SK-N-SH (cell line): ENCODE measurements at regions of chr7 and their contacts with region 1.

Region 1: GRCh38 chr7:139645572-139646523 is 122.4 kb downstream of the CLEC2L start:
- DNase-seq: peak; percentile 85
- H3K4me3 ChIP-seq: no peak overlapping the region; a peak in 1 of 4 replicates
- H3K27ac ChIP-seq: no peak overlapping the region
- H3K4me1 ChIP-seq: peaks cover 0 to 5% of the 10 kb centered on the region in 2 experiments; a peak in 1 of 4 replicates
- H3K27me3 ChIP-seq: no peaks in the 10 kb centered on the region
- CTCF ChIP-seq: peak; percentile 99
- EP300 ChIP-seq: no peak
- RAD21 ChIP-seq: peak; percentile 100

Region 2: DNA sequence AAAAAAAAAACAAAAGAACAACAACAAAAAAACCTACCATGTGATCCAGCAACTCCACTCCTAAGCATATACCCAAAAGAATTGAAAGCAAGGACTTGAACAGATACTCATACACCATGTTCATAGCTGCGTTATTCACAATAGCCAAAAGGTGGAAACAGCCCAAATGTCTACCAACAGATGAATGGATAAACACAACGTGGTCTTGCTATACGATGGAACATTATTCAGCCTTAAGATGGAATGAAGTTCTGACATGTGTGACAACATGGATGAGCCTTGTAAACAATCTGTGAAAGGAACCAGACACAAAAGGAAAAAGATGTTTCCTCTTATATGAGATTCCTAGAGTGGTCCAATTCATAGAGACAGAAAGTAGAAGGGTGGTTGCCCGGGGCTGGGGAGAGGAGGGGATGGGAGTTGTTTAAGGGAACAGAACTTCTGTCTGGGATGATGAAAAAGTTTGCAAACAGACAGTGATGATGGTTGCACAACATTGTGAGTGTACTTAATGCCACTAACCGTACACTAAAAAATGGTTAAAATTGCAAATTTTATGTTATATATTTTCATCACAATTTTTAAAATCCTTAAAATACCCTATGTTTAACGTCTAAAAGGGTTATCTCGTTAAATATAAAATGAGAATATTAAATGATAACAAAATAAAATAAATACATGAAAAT is 110.7 kb before region 1 on chr7:
- CTCF ChIA-PET with region 1: no interaction called
- POLR2A ChIA-PET with region 1: no interaction called
- DNase-seq: no peak
- H3K4me3 ChIP-seq: no peak overlapping the region
- H3K27ac ChIP-seq: no peak overlapping the region
- H3K4me1 ChIP-seq: no peaks in the 10 kb centered on the region
- H3K27me3 ChIP-seq: peaks cover 19% of the 10 kb centered on the region
- CTCF ChIP-seq: no peak
- EP300 ChIP-seq: no peak
- RAD21 ChIP-seq: no peak

Region 3: GRCh38 chr7:139629392-139630082 is 16.3 kb before region 1 on chr7:
- CTCF ChIA-PET with region 1: interaction called, 38 read pairs
- POLR2A ChIA-PET with region 1: no interaction called
- DNase-seq: no peak
- H3K4me3 ChIP-seq: no peak overlapping the region
- H3K27ac ChIP-seq: no peak overlapping the region
- H3K4me1 ChIP-seq: no peaks in the 10 kb centered on the region
- H3K27me3 ChIP-seq: no peaks in the 10 kb centered on the region
- CTCF ChIP-seq: no peak
- EP300 ChIP-seq: no peak
- RAD21 ChIP-seq: peak; percentile 25

Region 4: DNA sequence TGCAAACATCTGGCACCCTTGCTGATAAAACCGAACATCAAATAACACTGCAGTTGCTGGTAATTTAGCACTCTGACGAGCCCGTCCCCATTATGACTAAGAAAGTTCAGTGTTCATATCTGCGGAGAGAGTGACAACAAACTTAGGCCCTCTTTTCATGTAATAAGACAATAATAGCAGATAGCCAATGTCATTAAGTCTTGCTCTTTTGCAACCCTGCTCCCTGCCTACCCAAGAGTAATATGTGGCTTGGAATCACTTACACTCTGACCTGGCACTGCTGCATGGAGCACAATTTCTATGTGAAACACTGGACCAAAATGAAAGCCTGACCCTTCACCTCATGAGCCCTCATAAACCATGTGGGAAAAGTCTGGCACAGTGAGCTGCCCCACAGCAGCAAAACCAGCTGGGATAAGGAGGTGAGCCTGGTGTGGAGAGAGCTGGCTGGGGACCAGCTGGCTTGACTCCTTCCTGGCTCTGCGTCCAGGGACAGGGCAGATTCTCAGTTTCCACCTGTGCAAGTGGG is 45.5 kb after region 1 on chr7:
- CTCF ChIA-PET with region 1: interaction called, 14 read pairs
- POLR2A ChIA-PET with region 1: no interaction called
- DNase-seq: peak; percentile 81
- H3K4me3 ChIP-seq: no peak overlapping the region
- H3K27ac ChIP-seq: peak overlapping the region in 1 of 2 experiments; percentile 78; a peak in 2 of 4 replicates
- H3K4me1 ChIP-seq: peaks cover 0 to 34% of the 10 kb centered on the region in 2 experiments; a peak in 2 of 4 replicates
- H3K27me3 ChIP-seq: no peaks in the 10 kb centered on the region
- CTCF ChIP-seq: no peak
- EP300 ChIP-seq: peak in 1 of 2 experiments; percentile 61; a peak in 1 of 4 replicates
- RAD21 ChIP-seq: peak; percentile 33

Region 5: DNA sequence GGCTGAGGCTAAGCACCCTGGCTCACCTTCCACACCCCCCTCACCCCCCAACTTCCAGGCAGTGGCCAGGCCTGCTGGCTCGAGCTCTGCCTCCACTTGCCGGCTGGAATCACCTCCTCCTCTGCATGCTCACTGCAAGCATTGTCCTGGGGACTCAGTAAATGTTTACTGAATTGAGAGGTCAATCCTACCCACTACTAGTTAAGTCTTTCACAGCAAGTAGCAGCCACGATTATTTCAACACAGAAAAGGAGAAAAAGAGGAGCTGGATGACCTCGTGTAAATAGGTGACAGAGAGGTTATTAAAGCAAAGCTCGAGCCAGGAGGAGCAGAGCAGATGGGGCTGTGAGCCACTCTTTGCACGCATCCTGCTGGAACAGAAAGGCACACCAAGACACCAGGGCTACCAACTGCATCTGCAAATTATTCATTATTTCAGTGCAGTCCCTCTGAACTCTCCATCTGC is 99.9 kb after region 1 on chr7:
- CTCF ChIA-PET with region 1: interaction called, 26 read pairs
- POLR2A ChIA-PET with region 1: no interaction called
- DNase-seq: peak; percentile 45
- H3K4me3 ChIP-seq: no peak overlapping the region
- H3K27ac ChIP-seq: peak overlapping the region in 1 of 2 experiments; percentile 62; a peak in 1 of 4 replicates
- H3K4me1 ChIP-seq: peaks cover 31 to 46% of the 10 kb centered on the region in 2 experiments; a peak in 3 of 4 replicates
- H3K27me3 ChIP-seq: no peaks in the 10 kb centered on the region
- CTCF ChIP-seq: no peak
- EP300 ChIP-seq: no peak
- RAD21 ChIP-seq: no peak; the same call in 1 of the 2 replicates

Region 6: GRCh38 chr7:139777948-139778841 is 132.3 kb after region 1 on chr7 and contains the start of gene HIPK2:
- CTCF ChIA-PET with region 1: interaction called, 32 read pairs
- POLR2A ChIA-PET with region 1: no interaction called
- DNase-seq: peak; percentile 99
- H3K4me3 ChIP-seq: peak within 1 kb of the TSS; percentile 84 to 98
- H3K27ac ChIP-seq: peak within 1 kb of the TSS; percentile 87 to 97
- H3K4me1 ChIP-seq: peaks cover 22 to 23% of the 10 kb centered on the region in 2 experiments
- H3K27me3 ChIP-seq: no peaks in the 10 kb centered on the region
- CTCF ChIP-seq: no peak
- EP300 ChIP-seq: peak in 1 of 2 experiments; percentile 30; a peak in 1 of 4 replicates
- RAD21 ChIP-seq: no peak
- polyA plus RNA-seq, gene HIPK2: 9.2 and 14.2 TPM in 2 replicates

Region 7: DNA sequence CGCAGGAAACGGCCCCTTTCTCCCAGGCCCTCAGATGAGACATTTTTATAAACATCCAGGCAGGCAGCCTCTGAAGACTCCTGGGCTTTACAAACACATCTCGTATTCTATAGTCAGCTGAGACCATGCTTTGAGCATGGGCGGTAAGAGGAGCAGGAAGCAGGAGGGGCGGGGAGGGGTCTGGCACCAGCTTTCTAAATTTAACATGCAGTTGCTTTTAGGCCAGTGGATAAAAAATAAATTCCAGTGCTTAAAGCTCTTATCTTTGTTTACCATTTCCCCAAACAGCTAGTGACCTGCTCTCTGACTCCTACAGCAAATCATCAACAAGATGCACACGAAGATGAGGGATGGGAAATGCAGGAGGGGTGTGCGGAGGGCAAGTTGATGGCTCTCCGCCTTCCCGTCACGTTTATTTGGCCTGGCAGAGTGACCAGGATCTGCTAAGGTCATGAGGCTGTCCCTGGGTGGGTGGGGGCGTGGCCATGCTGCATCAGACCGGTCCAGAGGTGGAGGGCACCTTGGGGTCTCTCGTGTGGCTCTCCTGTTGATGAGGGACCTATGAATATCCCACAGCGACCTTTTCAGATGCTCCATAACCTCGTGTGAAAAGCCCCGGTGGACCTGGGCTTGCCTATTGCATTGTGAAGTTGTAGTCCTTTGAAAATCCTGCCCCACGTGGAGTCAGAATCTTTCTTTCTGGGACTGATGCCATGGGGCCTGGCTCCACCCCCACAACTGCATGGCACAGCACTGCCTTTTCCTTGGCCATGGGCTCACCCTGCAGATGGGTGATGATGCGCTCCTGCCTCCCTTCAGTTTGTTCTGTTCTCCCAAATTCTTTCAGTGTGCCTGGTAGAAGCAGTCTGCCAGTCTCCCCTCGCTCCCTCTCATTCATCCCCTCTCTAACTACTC is 349.4 kb after region 1 on chr7:
- CTCF ChIA-PET with region 1: interaction called, 229 read pairs
- POLR2A ChIA-PET with region 1: interaction called, 3 read pairs
- DNase-seq: no peak
- H3K4me3 ChIP-seq: no peak overlapping the region
- H3K27ac ChIP-seq: no peak overlapping the region
- H3K4me1 ChIP-seq: peaks cover 0 to 9% of the 10 kb centered on the region in 2 experiments; a peak in 1 of 4 replicates
- H3K27me3 ChIP-seq: no peaks in the 10 kb centered on the region
- CTCF ChIP-seq: no peak
- EP300 ChIP-seq: no peak
- RAD21 ChIP-seq: no peak

Region 8: GRCh38 chr7:140326116-140326928 is 680.5 kb after region 1 on chr7:
- CTCF ChIA-PET with region 1: interaction called, 13 read pairs
- POLR2A ChIA-PET with region 1: no interaction called
- DNase-seq: peak; percentile 79
- H3K4me3 ChIP-seq: no peak overlapping the region
- H3K27ac ChIP-seq: no peak overlapping the region
- H3K4me1 ChIP-seq: peaks cover 0 to 4% of the 10 kb centered on the region in 2 experiments; a peak in 1 of 4 replicates
- H3K27me3 ChIP-seq: no peaks in the 10 kb centered on the region
- CTCF ChIP-seq: peak; percentile 65
- EP300 ChIP-seq: no peak
- RAD21 ChIP-seq: peak; percentile 91